IMR-90 (cell line): ENCODE measurements at regions of chr6 and their contacts with region 1.

Region 1: GRCh38 chr6:83067448-83068413 is at the start of gene DOP1A:
- DNase-seq: peak; percentile 91
- ATAC-seq: peak; percentile 89
- H3K4me3 ChIP-seq: peak within 1 kb of the TSS; percentile 89
- H3K27ac ChIP-seq: peak within 1 kb of the TSS; percentile 62
- H3K4me1 ChIP-seq: no peaks in the 10 kb centered on the region
- H3K27me3 ChIP-seq: no peaks in the 10 kb centered on the region
- CTCF ChIP-seq: peak; percentile 99
- POLR2A ChIP-seq: 0 out of 2 replicates have a peak, but pooled peaks have one; percentile 31
- RAD21 ChIP-seq: peak; percentile 99
- total RNA-seq, gene DOP1A: 32.4 and 35.8 TPM in 2 replicates

Region 2: GRCh38 chr6:82363351-82364086 is 704.2 kb before region 1 on chr6 and contains the start of gene TPBG:
- CTCF ChIA-PET with region 1: interaction called, 4 read pairs
- POLR2A ChIA-PET with region 1: no interaction called
- dilution Hi-C with region 1: no loop called
- in situ Hi-C with region 1: loop called (anchors 25 kb)
- intact Hi-C with region 1: no loop called
- DNase-seq: peak; percentile 82
- ATAC-seq: peak; percentile 67
- H3K4me3 ChIP-seq: peak within 1 kb of the TSS; percentile 68
- H3K27ac ChIP-seq: peak within 1 kb of the TSS; percentile 98
- H3K4me1 ChIP-seq: peaks cover 8% of the 10 kb centered on the region
- H3K27me3 ChIP-seq: no peaks in the 10 kb centered on the region
- CTCF ChIP-seq: peak; percentile 34
- POLR2A ChIP-seq: peak; percentile 92
- RAD21 ChIP-seq: peak; percentile 23; the same call in 1 of the 2 replicates
- total RNA-seq, gene TPBG: 19.7 and 20.0 TPM in 2 replicates

Region 3: DNA sequence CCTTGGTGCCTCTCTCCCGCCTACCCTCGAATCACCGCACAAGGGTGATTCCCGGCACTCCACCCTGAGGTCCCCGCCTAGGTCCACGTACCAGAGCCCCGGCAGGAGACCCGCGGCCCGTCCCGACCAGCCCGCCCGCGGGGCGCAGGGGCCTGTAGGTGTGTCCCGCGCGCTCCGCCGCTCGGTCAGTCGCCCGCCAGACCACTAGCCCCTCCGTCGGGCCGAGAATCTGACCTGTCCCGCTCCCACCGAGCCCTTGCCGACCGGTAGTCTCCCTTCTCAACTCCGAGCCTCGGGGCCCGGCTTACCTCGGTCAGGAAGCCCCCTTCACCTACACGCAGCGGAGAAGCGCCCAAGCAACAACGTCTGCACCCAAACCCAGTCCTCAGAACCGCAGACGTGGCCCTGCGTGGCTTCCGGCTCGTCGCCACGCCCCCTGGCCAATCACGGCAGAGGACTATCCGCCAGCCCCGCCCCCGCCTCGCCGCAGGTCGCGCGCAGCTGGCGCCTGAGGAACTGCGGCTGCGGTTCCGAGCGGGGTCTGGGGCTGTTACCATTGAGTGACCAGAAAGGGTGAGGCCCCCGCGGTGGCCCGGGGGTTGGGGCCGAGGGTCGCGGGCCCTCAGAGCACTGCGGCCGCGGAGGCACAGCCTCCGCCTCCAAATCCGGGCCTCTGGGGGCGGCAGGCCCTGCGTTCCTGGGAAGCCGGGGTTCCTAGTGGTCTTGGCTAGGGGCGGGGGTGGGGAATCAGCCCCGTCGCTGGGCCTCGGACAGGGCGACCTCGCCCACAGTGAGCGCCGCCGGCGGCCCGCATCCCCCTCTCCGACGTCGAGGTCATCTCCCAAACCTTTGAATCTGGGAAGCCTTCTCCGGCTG is 125.4 kb after region 1 on chr6 and contains the starts of genes PGM3 and RWDD2A:
- CTCF ChIA-PET with region 1: interaction called, 19 read pairs
- POLR2A ChIA-PET with region 1: no interaction called
- dilution Hi-C with region 1: no loop called
- in situ Hi-C with region 1: loop called (anchors 5 kb)
- intact Hi-C with region 1: loop called (anchors 1 kb)
- DNase-seq: peak; percentile 84
- ATAC-seq: peak; percentile 97
- H3K4me3 ChIP-seq: peak within 1 kb of the TSS; percentile 91
- H3K27ac ChIP-seq: peak within 1 kb of the TSS; percentile 97
- H3K4me1 ChIP-seq: peaks cover 12% of the 10 kb centered on the region
- H3K27me3 ChIP-seq: no peaks in the 10 kb centered on the region
- CTCF ChIP-seq: no peak
- POLR2A ChIP-seq: peak; percentile 97
- RAD21 ChIP-seq: no peak
- total RNA-seq, gene PGM3: 223 and 336 TPM in 2 replicates
- total RNA-seq, gene RWDD2A: 3.9 and 4.7 TPM in 2 replicates

Region 4: GRCh38 chr6:83215131-83216047 is 147.7 kb after region 1 on chr6:
- CTCF ChIA-PET with region 1: interaction called, 71 read pairs
- POLR2A ChIA-PET with region 1: no interaction called
- dilution Hi-C with region 1: no loop called
- in situ Hi-C with region 1: no loop called
- intact Hi-C with region 1: loop called (anchors 1 kb)
- DNase-seq: peak; percentile 80
- ATAC-seq: peak; percentile 91
- H3K4me3 ChIP-seq: no peak overlapping the region
- H3K27ac ChIP-seq: peak overlapping the region; percentile 62; the same call in 1 of the 2 replicates
- H3K4me1 ChIP-seq: peaks cover 4% of the 10 kb centered on the region
- H3K27me3 ChIP-seq: no peaks in the 10 kb centered on the region
- CTCF ChIP-seq: peak; percentile 92
- POLR2A ChIP-seq: no peak
- RAD21 ChIP-seq: peak; percentile 84

Region 5: DNA sequence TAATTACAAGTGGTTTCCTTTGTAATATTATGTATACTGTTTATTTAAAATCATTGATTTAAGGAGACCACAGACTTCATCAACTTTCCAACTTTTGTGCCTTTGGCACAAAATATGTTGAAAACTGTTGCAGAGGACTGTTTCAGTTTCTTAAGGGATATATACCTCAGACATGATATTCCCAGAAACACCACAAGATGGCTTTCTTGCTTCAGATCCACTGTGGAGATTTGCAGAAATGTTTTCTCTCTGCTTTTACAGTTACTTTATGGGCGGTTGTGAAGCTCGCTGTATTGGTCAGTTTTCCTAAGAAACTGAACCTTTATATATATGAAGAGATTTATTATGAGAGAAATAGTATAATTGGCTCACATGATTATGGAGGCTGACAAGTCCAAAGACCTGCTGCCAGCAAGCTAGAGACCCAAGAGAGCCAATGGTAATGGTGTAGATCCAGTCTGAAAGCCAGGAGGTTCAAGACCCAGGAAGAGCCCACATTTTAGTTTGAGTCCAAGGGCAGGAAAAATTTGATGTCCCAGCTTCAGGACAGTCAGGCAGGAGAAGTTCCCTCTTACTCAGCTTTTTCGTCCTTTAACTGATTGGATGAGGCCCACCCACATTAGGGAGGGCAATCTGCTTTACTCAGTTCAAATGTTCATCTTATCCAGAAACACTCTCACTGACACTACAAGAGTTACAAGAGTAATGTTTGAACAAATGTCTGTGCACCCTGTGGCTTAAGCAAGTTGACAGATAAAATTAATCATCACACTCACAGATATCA is 350.3 kb after region 1 on chr6:
- CTCF ChIA-PET with region 1: interaction called, 22 read pairs
- POLR2A ChIA-PET with region 1: no interaction called
- dilution Hi-C with region 1: no loop called
- in situ Hi-C with region 1: no loop called
- intact Hi-C with region 1: loop called (anchors 2 kb)
- DNase-seq: peak; percentile 79
- ATAC-seq: peak; percentile 93
- H3K4me3 ChIP-seq: no peak overlapping the region
- H3K27ac ChIP-seq: no peak overlapping the region
- H3K4me1 ChIP-seq: 0 out of 2 replicates have a peak, but pooled peaks cover 2% of the 10 kb centered on the region
- H3K27me3 ChIP-seq: no peaks in the 10 kb centered on the region
- CTCF ChIP-seq: peak; percentile 76
- POLR2A ChIP-seq: no peak
- RAD21 ChIP-seq: peak; percentile 71

Region 6: DNA sequence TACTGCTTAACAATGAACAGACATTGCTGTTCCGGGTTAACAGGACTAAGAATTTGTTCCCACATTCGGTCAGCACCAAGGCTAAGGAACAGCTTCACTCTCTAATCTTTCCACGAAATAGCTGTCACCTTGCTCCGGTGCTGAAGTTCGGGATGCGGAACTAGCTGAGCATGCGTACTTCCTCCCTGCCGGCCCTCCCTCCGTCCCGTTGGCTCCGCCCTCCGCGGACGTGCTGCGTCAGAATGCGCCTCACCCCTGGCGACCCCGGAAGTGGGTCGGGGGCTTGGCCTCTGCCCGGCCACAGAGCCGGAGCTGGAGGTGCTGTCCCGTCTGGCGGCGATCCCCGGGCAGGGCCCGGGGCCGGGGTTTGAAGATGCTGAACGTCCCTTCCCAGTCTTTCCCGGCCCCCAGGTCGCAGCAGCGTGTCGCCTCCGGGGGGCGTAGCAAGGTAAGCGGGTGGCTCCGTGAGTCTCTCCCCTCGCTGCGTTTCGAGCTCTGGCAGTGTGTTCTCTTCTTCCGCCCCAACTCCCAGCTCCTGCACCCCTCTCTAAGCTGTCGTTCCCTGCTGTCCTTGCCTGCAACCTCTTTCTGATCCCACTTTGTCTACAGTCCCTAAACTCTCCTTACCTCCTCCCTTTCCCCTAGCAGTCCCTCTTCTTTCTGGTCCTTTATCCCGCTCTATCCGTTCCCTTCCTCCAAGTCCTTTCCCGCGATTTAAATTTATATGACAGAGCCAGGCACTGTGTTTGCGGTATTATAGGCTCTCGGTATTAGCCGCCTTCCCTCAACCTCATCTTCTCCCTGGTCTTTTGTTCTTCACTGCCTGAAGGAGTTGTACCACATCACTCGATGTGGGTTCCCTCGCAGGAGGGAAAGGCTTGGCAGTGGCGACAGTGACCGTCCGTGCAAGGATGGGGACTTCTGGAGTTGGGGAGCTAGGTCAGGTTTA is 792.0 kb after region 1 on chr6 and contains the start of gene CYB5R4:
- CTCF ChIA-PET with region 1: no interaction called
- POLR2A ChIA-PET with region 1: no interaction called
- dilution Hi-C with region 1: no loop called
- in situ Hi-C with region 1: no loop called
- intact Hi-C with region 1: loop called (anchors 5 kb)
- DNase-seq: peak; percentile 96
- ATAC-seq: peak; percentile 98
- H3K4me3 ChIP-seq: peak within 1 kb of the TSS; percentile 85
- H3K27ac ChIP-seq: peak within 1 kb of the TSS; percentile 45
- H3K4me1 ChIP-seq: peaks cover 7% of the 10 kb centered on the region
- H3K27me3 ChIP-seq: peaks cover 4% of the 10 kb centered on the region
- CTCF ChIP-seq: peak; percentile 43
- POLR2A ChIP-seq: peak; percentile 79; the same call in 1 of the 2 replicates
- RAD21 ChIP-seq: peak; percentile 18; the same call in 1 of the 2 replicates
- total RNA-seq, gene CYB5R4: 4.7 and 6.1 TPM in 2 replicates